ENCODE measurements at regions of chr3 and their contacts with region 1.

Region 1: DNA sequence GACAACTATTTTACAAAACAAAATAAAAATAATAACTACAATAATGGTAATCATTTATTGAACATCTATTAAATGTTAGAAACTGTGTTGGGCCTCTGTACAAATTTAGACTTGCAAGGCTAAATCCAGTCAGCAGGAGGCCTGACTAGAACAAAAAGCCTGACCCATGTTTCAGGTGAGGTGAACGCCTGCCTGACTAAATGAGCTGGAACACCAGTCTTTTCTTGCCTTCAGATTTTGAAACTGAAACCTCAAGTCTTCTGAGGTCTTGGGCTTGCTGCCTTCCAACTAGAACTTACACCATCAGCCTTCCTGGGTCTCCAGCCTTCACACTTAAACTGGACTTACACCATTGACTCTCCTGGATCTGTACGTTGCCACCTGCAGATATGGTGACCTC is 706.9 kb downstream of the TBL1XR1 start:
- DNase-seq: no peak
- H3K4me3 ChIP-seq: no peak overlapping the region
- H3K27ac ChIP-seq: no peak overlapping the region
- H3K4me1 ChIP-seq: no peaks in the 10 kb centered on the region
- H3K27me3 ChIP-seq: no peaks in the 10 kb centered on the region
- CTCF ChIP-seq: no peak

Region 2: GRCh38 chr3:176554264-176554663 is 63.9 kb after region 1 on chr3:
- intact Hi-C with region 1: loop called (anchors 10 kb)
- DNase-seq: no peak
- H3K4me3 ChIP-seq: no peak overlapping the region
- H3K27ac ChIP-seq: no peak overlapping the region
- H3K4me1 ChIP-seq: no peaks in the 10 kb centered on the region
- H3K27me3 ChIP-seq: no peaks in the 10 kb centered on the region
- CTCF ChIP-seq: no peak

Measured in ascending aorta (tissue), 2 donors.